ENCODE measurements at regions of chr15 and their contacts with region 1.

Region 1: DNA sequence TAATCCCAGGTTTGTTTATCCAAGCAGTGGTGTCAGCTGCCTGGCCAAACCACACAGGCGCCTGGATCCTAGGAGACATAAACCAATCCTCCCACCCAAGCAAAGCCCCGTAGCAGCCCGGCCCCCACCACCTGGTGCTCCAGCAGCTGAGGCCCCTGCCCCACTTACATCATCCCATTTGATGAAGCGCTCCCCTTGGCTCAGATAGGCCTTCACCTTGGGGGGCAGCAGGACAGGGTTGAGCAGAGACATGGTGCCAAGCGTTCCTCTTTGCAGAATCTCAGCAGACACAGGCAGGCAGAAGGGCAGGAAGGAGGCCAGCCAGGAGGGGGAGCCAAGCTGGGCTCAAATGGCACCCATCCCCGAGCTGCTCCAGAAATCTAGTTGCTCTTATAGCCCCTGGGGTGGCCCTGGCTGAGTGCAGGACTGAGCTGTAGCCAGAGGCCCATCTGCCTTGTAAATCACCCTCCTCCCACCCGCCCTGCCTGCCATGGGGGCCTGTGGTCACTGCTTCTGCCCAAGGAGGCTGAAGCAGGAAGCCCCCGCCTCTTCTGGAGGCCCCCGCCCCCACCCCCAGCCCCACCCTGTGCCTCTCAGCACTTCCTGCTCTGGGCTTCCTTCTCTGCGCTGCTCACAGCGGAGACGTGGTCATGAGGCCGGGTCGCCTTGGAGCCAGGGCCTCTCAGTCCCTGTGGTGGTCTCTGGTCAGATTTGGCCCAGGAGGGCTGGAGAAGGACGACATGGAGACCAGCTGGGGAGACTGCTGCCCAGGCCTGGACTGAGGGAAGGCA is at the start of gene PLCB2:
- DNase-seq: peak; percentile 77 to 87 (median 83)
- H3K4me3 ChIP-seq: peak within 1 kb of the TSS; percentile 53 to 92 (median 82)
- H3K27ac ChIP-seq: peak within 1 kb of the TSS; percentile 56 to 81
- H3K4me1 ChIP-seq: peaks cover 4 to 64% (median 50%) of the 10 kb centered on the region in 4 experiments
- H3K27me3 ChIP-seq: no peaks in the 10 kb centered on the region

Region 2: GRCh38 chr15:40282144-40282868 is 25.3 kb before region 1 on chr15:
- CTCF ChIA-PET with region 1: interaction called, 407 read pairs
- POLR2A ChIA-PET with region 1: interaction called, 11 read pairs
- DNase-seq: peak; percentile 56 to 80 (median 72)
- H3K4me3 ChIP-seq: peak overlapping the region; percentile 20 to 78 (median 67)
- H3K27ac ChIP-seq: no peak overlapping the region
- H3K4me1 ChIP-seq: peaks cover 0 to 54% (median 38%) of the 10 kb centered on the region in 4 experiments
- H3K27me3 ChIP-seq: peaks cover 0 to 41% (median 0%) of the 10 kb centered on the region in 5 experiments

Region 3: DNA sequence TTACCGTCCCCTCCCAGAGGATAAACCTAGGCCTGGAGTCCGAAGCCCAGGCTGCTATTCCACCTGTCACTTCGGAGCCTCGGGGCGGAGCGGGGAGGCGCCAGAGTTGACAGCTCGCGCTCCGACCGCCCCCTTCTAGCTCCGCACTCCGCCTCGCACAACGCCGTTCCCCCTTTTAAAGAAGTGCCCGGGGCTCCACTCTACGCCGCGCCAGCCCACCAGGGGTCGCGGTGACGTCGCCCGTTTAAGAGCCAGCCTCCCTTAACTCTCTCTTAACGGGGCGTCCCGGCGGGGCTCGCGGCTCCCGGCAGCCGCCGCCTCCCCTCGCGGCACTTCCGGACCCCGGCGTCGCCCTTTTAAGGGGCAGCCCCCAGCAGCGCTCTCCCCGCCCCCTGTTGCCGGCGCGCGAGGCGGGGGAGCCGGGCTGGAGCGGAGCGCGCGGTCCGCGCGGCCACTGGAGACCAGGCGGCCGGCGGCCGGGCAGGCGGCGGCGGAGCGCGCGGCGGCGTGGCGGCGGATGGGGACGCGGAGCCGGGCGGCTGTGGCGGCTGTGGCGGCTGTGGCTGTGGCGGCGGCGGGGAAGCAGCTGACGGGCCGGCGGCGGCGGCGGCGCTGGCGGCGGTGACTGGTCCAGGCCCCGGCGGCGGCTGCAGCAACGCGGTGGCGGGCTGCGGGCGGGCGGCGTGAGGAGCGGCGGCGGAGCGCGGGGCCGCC is 15.8 kb after region 1 on chr15 and contains the start of gene INAFM2:
- CTCF ChIA-PET with region 1: interaction called, 1,099 read pairs
- POLR2A ChIA-PET with region 1: interaction called, 3 read pairs
- DNase-seq: peak; percentile 96 to 98 (median 98)
- H3K4me3 ChIP-seq: peak within 1 kb of the TSS; percentile 41 to 84 (median 81)
- H3K27ac ChIP-seq: peak within 1 kb of the TSS in 1 of 2 experiments; percentile 59
- H3K4me1 ChIP-seq: peaks cover 32 to 64% (median 59%) of the 10 kb centered on the region in 4 experiments
- H3K27me3 ChIP-seq: no peaks in the 10 kb centered on the region